ENCODE measurements at regions of chr16 and their contacts with region 1.

Region 1: DNA sequence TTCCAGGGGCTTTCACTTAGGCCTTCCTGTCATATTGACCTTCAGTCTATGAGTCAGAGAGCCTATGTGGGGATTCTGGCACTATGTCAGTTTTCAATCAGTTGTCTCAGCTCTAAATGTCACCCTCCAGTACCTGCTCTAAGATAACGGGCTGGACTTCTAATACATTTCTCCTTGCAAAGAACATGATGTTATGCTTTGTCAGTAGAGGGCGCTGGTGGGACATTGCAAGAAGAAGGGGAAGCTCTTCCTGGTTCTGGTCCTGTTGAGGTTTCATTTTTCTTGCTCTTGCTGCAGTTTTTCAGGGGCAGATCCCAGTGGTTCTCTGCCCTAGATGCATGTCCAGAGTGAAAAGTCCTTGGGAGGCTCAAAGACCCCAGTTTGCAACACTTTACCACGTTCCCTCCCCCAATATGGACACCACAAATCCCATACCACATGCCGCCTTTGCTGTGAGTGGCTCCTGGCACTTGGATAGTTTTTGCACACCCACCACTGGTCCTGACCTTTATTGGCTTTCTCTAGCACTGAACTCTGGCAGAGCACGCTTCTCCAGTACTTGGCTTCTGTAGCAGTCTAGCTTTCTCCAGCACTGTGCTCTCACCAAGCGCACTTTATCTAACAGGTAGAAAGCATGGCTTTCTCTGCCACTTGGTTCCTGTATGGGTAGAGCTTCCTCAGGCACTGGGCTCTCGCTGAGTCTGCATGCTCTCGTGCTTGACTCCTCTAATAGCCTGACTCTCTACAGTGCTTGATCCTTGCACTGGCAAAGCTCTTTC is 49.0 kb downstream of the BCL7C start:
- DNase-seq: peak; percentile 72 to 81
- H3K4me3 ChIP-seq: no peak overlapping the region
- H3K27ac ChIP-seq: no peak overlapping the region
- H3K4me1 ChIP-seq: 0 out of 2 replicates have a peak, but pooled peaks cover 4% of the 10 kb centered on the region
- H3K27me3 ChIP-seq: no peaks in the 10 kb centered on the region
- CTCF ChIP-seq: peak; percentile 97

Region 2: DNA sequence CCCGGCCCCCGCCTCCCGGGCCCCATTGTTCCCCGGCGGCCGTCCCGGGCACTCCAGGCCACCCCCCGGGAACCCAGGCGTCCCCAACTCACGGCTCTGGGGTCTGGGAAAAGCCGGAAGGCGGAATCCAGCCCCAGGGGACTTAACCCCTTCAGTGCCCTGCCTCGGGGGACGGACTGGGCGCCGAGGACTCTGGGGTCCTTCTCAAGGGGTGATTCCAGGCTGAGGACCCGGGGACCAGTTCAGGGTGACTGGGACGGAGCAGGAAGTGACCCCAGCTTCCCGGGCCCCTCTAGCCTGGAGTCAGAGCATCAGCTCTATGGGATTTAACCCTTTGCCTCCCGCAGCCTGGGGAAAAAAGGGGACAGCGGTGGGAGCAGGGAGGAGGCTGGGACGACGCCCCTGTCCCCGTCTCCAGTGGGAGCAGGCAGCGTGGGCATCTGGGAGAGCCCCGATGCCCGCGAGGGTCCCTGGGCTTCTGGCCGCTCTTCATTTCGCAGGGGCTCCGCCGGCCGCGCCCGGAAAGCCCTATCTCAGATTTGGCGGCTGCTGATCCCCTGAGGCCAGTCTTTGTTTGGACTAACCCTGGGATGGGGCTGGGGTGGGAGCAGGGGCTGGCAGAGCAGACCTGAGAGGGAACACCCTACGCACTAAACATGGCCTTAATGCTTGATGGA is 57.8 kb before region 1 on chr16 and contains the start of gene ZNF629:
- CTCF ChIA-PET with region 1: no interaction called
- POLR2A ChIA-PET with region 1: no interaction called
- intact Hi-C with region 1: loop called (anchors 2 kb)
- DNase-seq: peak; percentile 49 to 75
- H3K4me3 ChIP-seq: peak within 1 kb of the TSS; percentile 97
- H3K27ac ChIP-seq: no peak within 1 kb of the TSS
- H3K4me1 ChIP-seq: peaks cover 14% of the 10 kb centered on the region
- H3K27me3 ChIP-seq: no peaks in the 10 kb centered on the region
- CTCF ChIP-seq: no peak
- total RNA-seq, gene ZNF629: 21.7 and 25.6 TPM in 2 replicates

Region 3: GRCh38 chr16:30902029-30902972 is 57.4 kb after region 1 on chr16:
- CTCF ChIA-PET with region 1: interaction called, 12 read pairs
- POLR2A ChIA-PET with region 1: no interaction called
- intact Hi-C with region 1: loop called (anchors 2 kb)
- DNase-seq: peak in 1 of 2 experiments; percentile 82
- H3K4me3 ChIP-seq: peak overlapping the region; percentile 73
- H3K27ac ChIP-seq: no peak overlapping the region
- H3K4me1 ChIP-seq: peaks cover 16% of the 10 kb centered on the region; the same call in 1 of the 2 replicates
- H3K27me3 ChIP-seq: no peaks in the 10 kb centered on the region
- CTCF ChIP-seq: 0 out of 2 replicates have a peak, but pooled peaks have one; percentile 25

Region 4: GRCh38 chr16:30941600-30942425 is 97.0 kb after region 1 on chr16:
- CTCF ChIA-PET with region 1: interaction called, 10 read pairs
- POLR2A ChIA-PET with region 1: no interaction called
- intact Hi-C with region 1: loop called (anchors 1 kb)
- DNase-seq: peak; percentile 63 to 87
- H3K4me3 ChIP-seq: no peak overlapping the region
- H3K27ac ChIP-seq: no peak overlapping the region
- H3K4me1 ChIP-seq: peaks cover 6% of the 10 kb centered on the region; the same call in 1 of the 2 replicates
- H3K27me3 ChIP-seq: no peaks in the 10 kb centered on the region
- CTCF ChIP-seq: peak; percentile 98

Region 5: GRCh38 chr16:31008154-31008950 is 163.5 kb after region 1 on chr16:
- CTCF ChIA-PET with region 1: no interaction called
- POLR2A ChIA-PET with region 1: no interaction called
- intact Hi-C with region 1: no loop called
- DNase-seq: no peak
- H3K4me3 ChIP-seq: no peak overlapping the region
- H3K27ac ChIP-seq: no peak overlapping the region
- H3K4me1 ChIP-seq: peaks cover 10% of the 10 kb centered on the region
- H3K27me3 ChIP-seq: peaks cover 14% of the 10 kb centered on the region; the same call in 1 of the 2 replicates
- CTCF ChIP-seq: no peak